Mammary epithelial cell (primary cell): ENCODE measurements at regions of chrX and their contacts with region 1.

Region 1: GRCh38 chrX:120769576-120770341 is 105.9 kb downstream of the CT47B1 start:
- DNase-seq: peak; percentile 64
- H3K4me3 ChIP-seq: no peak overlapping the region
- H3K27ac ChIP-seq: no peak overlapping the region
- H3K4me1 ChIP-seq: peaks cover 8% of the 10 kb centered on the region
- H3K27me3 ChIP-seq: no peaks in the 10 kb centered on the region
- CTCF ChIP-seq: peak; percentile 17 to 46

Region 2: GRCh38 chrX:120499301-120500072 is 270.3 kb before region 1 on chrX:
- CTCF ChIA-PET with region 1: no interaction called
- dilution Hi-C with region 1: no loop called
- in situ Hi-C with region 1: loop called (anchors 10 to 25 kb)
- intact Hi-C with region 1: loop called (anchors 1 kb)
- DNase-seq: no peak
- H3K4me3 ChIP-seq: no peak overlapping the region
- H3K27ac ChIP-seq: no peak overlapping the region
- H3K4me1 ChIP-seq: no peaks in the 10 kb centered on the region
- H3K27me3 ChIP-seq: no peaks in the 10 kb centered on the region
- CTCF ChIP-seq: no peak

Region 3: DNA sequence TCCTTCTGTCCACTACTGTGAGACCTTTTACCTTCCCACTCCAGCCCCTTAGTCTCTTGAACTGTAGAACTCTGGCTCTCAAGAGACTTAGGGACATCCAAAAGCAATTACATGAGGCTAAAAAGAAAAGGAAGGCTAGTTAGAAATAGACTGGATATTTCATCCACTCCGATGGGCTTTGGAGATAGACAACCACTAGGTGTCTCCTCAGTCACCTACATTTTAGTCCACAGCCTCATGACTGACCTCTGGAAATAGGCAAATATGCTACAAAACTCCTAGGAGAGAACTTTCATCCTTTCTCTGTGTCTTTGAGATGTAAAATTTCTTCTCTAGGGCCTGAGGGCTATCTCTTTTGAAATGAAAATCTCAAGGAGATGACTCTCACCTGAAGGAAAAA is 255.5 kb before region 1 on chrX:
- CTCF ChIA-PET with region 1: no interaction called
- dilution Hi-C with region 1: no loop called
- in situ Hi-C with region 1: loop called in 1 of 2 experiments (anchors 25 kb)
- intact Hi-C with region 1: loop called (anchors 1 kb)
- DNase-seq: peak; percentile 19
- H3K4me3 ChIP-seq: no peak overlapping the region
- H3K27ac ChIP-seq: no peak overlapping the region
- H3K4me1 ChIP-seq: no peaks in the 10 kb centered on the region
- H3K27me3 ChIP-seq: no peaks in the 10 kb centered on the region
- CTCF ChIP-seq: peak; percentile 52 to 68